ENCODE measurements at regions of chr15 and their contacts with region 1.

Region 1: GRCh38 chr15:83011271-83012075 is at the start of gene C15orf40:
- DNase-seq: peak; percentile 80 to 93 (median 90)
- H3K4me3 ChIP-seq: peak within 1 kb of the TSS; percentile 72 to 100 (median 95)
- H3K27ac ChIP-seq: peak within 1 kb of the TSS; percentile 42 to 95 (median 87)
- H3K27me3 ChIP-seq: no peaks in the 10 kb centered on the region
- CTCF ChIP-seq: peak; percentile 57 to 94 (median 83)
- total RNA-seq, gene C15orf40: 15.7 to 34.4 (median 22.5) TPM

Region 2: DNA sequence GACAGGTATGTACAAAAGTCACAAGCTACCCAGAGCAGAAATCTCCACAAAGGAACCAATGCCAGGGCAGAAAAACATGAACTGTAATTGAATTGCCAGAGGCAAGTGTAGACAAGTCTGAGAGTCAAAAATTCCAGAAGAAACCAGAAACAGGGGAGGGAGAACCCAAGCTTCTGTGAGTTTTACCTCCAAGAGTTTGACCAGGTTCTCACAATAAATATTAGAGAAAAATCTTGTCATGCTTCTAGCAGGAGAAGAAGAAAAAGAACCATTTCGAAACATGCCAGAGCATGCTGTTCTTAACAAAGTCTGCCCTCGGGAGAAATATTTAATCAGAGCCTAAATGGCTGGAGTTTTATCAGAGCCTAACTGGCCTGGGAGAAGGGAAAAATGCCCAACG is 269.3 kb before region 1 on chr15:
- intact Hi-C with region 1: no loop called
- DNase-seq: no peak
- H3K4me3 ChIP-seq: no peak overlapping the region
- H3K27ac ChIP-seq: no peak overlapping the region
- H3K27me3 ChIP-seq: no peaks in the 10 kb centered on the region
- CTCF ChIP-seq: no peak

Region 3: DNA sequence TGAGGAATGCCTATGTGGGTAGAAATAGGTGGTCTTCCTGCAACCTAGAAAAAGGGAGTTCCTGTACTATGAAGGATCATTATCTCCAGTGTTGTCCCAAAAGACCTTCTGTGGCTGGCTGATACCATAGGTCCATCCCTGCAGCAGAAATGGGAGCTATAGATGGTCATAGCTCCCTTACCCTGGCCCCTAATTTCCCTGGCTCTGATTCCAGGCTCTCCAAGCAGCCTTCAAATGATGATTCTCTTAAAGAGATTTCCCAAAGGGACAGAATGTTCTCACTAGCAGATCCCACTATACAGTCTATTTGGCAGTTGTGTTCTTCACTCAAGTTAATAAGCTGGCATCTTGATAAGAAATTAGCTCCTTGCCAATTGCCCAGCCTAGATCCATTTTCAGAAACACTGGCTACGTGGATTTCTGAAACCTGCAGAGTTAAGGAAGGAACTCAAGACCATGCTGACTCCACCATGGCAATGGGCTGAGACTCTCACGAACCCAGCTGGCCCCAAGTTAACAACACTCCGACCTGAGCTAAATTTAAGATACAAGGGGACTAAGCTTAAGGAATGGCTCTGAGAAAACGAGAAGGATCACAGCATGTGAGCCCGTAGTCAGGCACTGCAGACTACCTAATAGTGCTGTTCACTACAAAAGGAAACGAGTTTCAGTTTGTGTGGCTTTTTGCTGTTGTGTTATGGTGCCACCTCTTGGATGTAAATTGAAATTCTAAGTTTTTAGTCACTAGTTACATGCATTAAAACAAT is 11.4 kb before region 1 on chr15:
- intact Hi-C with region 1: no loop called
- DNase-seq: no peak
- H3K4me3 ChIP-seq: peak overlapping the region in 44 of 59 donors; percentile 4 to 59 (median 36)
- H3K27ac ChIP-seq: peak overlapping the region in 24 of 59 donors; percentile 3 to 77 (median 44)
- H3K27me3 ChIP-seq: no peaks in the 10 kb centered on the region
- CTCF ChIP-seq: peak; percentile 19 to 76 (median 57)

Region 4: DNA sequence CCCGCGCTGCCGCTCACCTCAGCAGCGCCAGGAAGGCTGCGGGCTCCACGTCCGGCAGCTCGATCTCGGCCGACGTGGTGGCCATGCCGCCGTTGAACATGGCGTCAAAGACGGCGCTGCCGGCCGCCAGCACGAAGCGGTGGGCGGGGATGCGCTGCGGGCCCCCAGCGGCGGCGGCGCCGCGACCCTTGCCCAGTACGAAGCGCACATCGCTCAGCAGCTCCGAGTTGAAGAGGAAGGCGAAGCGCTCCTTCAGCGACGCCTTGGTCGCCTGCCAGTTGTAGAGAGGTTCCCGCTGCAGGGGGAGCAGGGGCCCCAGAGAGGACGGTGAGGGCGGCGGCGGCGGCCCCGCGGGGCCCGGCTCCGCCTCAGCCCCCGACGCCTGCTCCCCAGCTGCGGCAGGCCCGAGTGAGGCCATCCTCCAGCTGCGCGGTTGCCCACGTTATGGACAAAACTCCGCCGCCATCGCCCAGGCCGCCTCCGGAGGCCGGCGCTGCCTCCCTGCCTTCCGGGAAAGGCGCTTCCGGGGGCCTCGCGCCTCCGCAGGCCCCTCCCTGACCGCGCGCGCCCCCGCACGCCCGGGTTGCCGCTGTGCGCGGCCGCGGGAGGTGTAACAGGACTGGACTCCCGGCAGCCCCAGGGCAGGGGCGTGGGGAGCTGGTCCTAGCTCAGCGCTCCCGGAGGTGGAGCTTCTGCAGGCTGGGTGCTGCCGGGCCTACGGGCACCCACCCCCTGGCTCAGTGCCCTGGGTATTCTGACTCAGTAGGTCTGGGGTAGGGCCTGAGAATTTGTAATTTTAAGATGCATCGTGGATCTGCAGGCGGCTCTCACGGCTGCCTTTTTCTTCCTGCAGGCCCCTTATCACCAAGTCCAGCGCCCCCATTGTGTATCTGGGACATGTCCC is 55.5 kb after region 1 on chr15 and contains the start of gene BTBD1:
- intact Hi-C with region 1: loop called (anchors 2 kb)
- DNase-seq: peak; percentile 73 to 95 (median 88)
- H3K4me3 ChIP-seq: peak within 1 kb of the TSS; percentile 68 to 98 (median 91)
- H3K27ac ChIP-seq: peak within 1 kb of the TSS; percentile 72 to 99 (median 96)
- H3K27me3 ChIP-seq: no peaks in the 10 kb centered on the region
- CTCF ChIP-seq: peak in 48 of 56 donors; percentile 13 to 69 (median 36)
- total RNA-seq, gene BTBD1: 61.4 to 113 (median 85.9) TPM

Region 5: GRCh38 chr15:83108266-83109226 is 97.1 kb after region 1 on chr15:
- intact Hi-C with region 1: loop called in 1 of 2 experiments (anchors 5 kb)
- DNase-seq: peak in 8 of 10 donors; percentile 16 to 54 (median 50)
- H3K4me3 ChIP-seq: peak overlapping the region in 58 of 59 donors; percentile 21 to 75 (median 62)
- H3K27ac ChIP-seq: peak overlapping the region in 52 of 59 donors; percentile 15 to 91 (median 74)
- H3K27me3 ChIP-seq: peaks cover 0 to 25% (median 7%) of the 10 kb centered on the region in 45 donors
- CTCF ChIP-seq: no peak

Region 6: DNA sequence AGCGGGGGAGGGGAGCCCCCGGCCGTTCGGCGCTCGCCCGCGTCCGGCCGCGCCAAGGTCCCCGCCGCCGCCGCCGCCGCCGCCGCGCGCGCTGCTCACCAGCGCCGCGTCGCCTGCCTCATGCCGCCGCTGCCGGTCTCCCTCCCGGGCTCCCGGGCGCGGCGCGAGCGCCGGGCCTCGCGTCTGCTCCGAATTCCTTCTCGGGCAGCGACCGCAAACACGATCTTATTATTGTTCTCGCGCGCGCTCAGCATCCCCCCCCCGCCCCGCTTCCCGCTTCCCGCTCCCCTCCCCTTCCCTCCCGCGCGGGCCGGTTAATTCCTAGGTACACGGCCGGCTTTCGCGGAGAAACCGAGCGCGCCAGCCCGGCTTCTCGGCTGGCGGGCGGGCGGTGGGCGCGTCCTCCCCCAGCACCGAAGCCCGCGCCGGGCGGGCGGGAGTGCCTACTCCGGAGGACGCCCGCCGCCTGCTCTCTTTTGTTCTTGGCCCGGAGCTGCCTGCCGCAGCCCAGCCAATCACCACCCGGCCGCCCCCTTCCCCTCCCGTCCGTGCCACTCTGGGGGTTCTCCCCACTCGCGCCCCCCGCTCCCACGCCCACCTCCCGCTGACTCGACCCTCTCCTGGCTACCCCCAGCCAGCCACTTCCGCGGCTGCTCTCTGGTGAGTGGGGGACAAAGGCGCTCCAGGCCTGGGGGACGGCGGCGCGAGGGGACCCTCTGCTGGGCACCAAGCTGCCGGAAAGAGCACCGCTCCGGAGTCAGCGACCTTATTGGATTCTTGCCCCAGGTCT is 196.3 kb after region 1 on chr15 and contains the start of gene HDGFL3:
- intact Hi-C with region 1: loop called (anchors 1 to 5 kb)
- DNase-seq: peak; percentile 39 to 78 (median 62)
- H3K4me3 ChIP-seq: peak within 1 kb of the TSS; percentile 61 to 96 (median 86)
- H3K27ac ChIP-seq: peak within 1 kb of the TSS in 58 of 59 donors; percentile 46 to 95 (median 87)
- H3K27me3 ChIP-seq: no peaks in the 10 kb centered on the region
- CTCF ChIP-seq: peak in 4 of 56 donors; percentile 8 to 26 (median 12)
- total RNA-seq, gene HDGFL3: 80.3 to 166 (median 119) TPM